Natural killer cell (primary cell): ENCODE measurements at regions of chr2 and their contacts with region 1.

Region 1: DNA sequence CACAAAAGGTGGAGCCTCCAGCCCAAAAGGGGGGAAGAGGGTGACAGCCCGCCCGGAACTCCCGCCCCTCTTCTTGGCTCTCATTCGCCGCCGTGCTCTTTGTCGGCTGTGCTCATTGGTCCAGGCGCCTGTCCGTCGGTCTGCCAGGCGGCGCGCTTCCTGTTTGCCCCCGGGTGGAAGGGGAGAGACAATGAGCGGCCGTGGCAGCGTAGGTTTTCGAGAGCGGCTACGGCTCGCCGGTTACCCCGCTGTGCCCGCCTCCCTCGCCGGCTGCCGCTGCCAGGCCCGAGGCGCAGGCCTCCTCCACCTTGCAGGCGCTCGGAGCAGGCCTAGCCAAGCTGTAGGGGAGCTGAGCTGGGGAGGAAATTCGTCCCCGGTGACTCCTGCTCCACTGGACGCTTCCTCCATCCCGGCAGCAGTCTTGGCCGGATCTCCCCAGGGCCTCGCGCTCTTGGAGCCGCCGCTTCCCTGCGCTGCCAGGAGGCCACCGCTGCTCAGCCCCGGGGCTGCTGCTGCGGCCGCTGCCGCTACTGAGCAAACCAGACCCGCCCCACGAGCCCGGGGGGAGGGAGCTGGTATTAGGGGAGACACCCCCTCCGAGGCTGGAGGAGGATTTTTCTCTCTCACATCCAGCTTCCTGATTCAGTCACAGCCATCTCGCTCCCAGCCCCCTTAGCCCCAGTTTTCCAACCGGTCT is at the start of gene SP3:
- DNase-seq: peak; percentile 94 to 98
- ATAC-seq: peak; percentile 58 to 80 (median 67)
- H3K4me3 ChIP-seq: peak within 1 kb of the TSS; percentile 80
- H3K4me3 Mint-ChIP-seq: peak within 1 kb of the TSS; percentile 98
- H3K27ac ChIP-seq: peak within 1 kb of the TSS; percentile 96
- H3K27ac Mint-ChIP-seq: peak within 1 kb of the TSS; percentile 97 to 98
- H3K4me1 ChIP-seq: peaks cover 8% of the 10 kb centered on the region
- H3K4me1 Mint-ChIP-seq: peaks cover 34 to 35% of the 10 kb centered on the region in 2 donors
- H3K27me3 ChIP-seq: no peaks in the 10 kb centered on the region
- H3K27me3 Mint-ChIP-seq: no peaks in the 10 kb centered on the region
- CTCF ChIP-seq: no peak
- total RNA-seq, gene SP3: 179 to 200 (median 188) TPM

Region 2: DNA sequence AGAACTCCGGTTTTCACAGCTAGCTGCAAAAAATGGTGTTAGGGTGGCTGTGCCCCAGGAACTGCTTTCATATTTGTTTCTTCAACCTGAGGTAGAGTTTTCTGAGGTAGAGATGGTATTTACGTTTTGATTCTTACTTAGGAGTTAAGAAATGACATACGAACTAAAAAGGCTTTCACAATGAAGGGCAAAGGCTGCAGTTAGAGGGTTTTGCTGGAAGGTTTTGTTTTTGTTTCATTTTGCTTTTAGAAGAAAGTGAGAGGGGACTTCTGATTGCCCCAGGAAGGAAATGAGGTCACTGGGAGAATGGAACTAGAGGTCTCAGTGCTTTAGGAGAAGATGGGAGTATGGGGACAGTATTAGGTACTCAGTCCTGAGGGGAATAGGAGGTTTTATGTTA is 595.3 kb before region 1 on chr2:
- intact Hi-C with region 1: no loop called
- DNase-seq: peak in 1 of 2 donors; percentile 29
- ATAC-seq: no peak
- H3K4me3 ChIP-seq: no peak overlapping the region
- H3K4me3 Mint-ChIP-seq: no peak overlapping the region
- H3K27ac ChIP-seq: no peak overlapping the region
- H3K27ac Mint-ChIP-seq: peak overlapping the region in 1 of 2 donors; percentile 8
- H3K4me1 ChIP-seq: no peaks in the 10 kb centered on the region
- H3K4me1 Mint-ChIP-seq: peaks cover 0 to 8% of the 10 kb centered on the region in 2 donors
- H3K27me3 ChIP-seq: no peaks in the 10 kb centered on the region
- H3K27me3 Mint-ChIP-seq: no peaks in the 10 kb centered on the region
- CTCF ChIP-seq: no peak

Region 3: GRCh38 chr2:173815772-173816171 is 149.7 kb before region 1 on chr2:
- intact Hi-C with region 1: no loop called
- DNase-seq: no peak
- ATAC-seq: no peak
- H3K4me3 ChIP-seq: no peak overlapping the region
- H3K4me3 Mint-ChIP-seq: no peak overlapping the region
- H3K27ac ChIP-seq: no peak overlapping the region
- H3K27ac Mint-ChIP-seq: no peak overlapping the region
- H3K4me1 ChIP-seq: no peaks in the 10 kb centered on the region
- H3K4me1 Mint-ChIP-seq: no peaks in the 10 kb centered on the region
- H3K27me3 ChIP-seq: no peaks in the 10 kb centered on the region
- H3K27me3 Mint-ChIP-seq: peaks cover 4 to 24% of the 10 kb centered on the region in 2 donors
- CTCF ChIP-seq: no peak

Region 4: GRCh38 chr2:173884025-173884802 is 81.3 kb before region 1 on chr2:
- intact Hi-C with region 1: loop called (anchors 2 kb)
- DNase-seq: peak in 1 of 2 donors; percentile 57
- ATAC-seq: peak; percentile 54 to 74 (median 68)
- H3K4me3 ChIP-seq: no peak overlapping the region
- H3K4me3 Mint-ChIP-seq: no peak overlapping the region
- H3K27ac ChIP-seq: no peak overlapping the region
- H3K27ac Mint-ChIP-seq: no peak overlapping the region
- H3K4me1 ChIP-seq: no peaks in the 10 kb centered on the region
- H3K4me1 Mint-ChIP-seq: peaks cover 10 to 11% of the 10 kb centered on the region in 2 donors
- H3K27me3 ChIP-seq: peaks cover 1% of the 10 kb centered on the region
- H3K27me3 Mint-ChIP-seq: peaks cover 8 to 46% of the 10 kb centered on the region in 2 donors
- CTCF ChIP-seq: peak; percentile 42

Region 5: GRCh38 chr2:173942861-173943538 is 22.5 kb before region 1 on chr2:
- intact Hi-C with region 1: loop called (anchors 2 kb)
- DNase-seq: no peak
- ATAC-seq: no peak
- H3K4me3 ChIP-seq: no peak overlapping the region
- H3K4me3 Mint-ChIP-seq: no peak overlapping the region
- H3K27ac ChIP-seq: no peak overlapping the region
- H3K27ac Mint-ChIP-seq: peak overlapping the region in 1 of 2 donors; percentile 78
- H3K4me1 ChIP-seq: peaks cover 28% of the 10 kb centered on the region
- H3K4me1 Mint-ChIP-seq: peaks cover 73 to 77% of the 10 kb centered on the region in 2 donors
- H3K27me3 ChIP-seq: no peaks in the 10 kb centered on the region
- H3K27me3 Mint-ChIP-seq: no peaks in the 10 kb centered on the region
- CTCF ChIP-seq: no peak

Region 6: DNA sequence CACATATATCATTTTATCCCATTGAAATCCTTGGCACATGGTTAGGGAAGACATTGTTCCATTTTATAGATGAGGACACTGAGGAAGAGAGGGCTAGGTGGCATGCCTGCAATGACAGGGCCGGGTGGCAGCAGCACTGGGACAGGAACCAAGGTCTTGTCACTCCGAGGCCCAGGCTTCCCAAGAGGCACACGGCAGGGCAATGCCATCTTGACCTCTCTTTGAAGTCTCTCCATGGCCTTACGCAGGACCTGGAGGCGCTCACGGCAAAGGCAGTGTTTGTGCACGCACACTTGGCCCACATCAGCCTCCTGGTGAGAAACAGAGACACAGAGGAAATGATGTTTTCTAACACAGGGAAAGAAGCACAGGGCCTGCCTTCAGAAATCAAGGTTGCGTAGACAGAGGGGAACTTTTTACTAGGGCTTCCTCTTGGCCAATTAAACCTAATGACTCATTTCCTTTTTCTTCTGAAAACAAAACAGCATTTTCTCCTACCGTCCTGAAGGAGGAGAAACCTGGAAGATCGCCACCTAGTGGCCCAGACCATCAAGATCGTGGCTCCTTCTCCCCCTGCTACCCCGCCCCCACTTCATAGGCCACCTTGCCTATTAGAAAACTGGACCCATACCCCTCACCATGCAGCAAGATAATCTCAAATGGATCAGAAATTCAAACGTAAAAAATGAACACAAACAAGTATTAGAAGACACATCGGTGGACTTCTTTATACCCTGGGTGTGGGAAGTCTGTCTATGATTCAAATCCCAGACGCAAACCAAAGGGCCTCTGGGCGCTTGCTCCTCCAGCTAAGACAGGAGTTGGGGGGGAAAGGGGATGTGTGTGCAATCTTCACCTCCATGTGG is 74.3 kb after region 1 on chr2:
- intact Hi-C with region 1: loop called (anchors 1 kb)
- DNase-seq: peak; percentile 75 to 94
- ATAC-seq: peak; percentile 90 to 95 (median 94)
- H3K4me3 ChIP-seq: no peak overlapping the region
- H3K4me3 Mint-ChIP-seq: peak overlapping the region; percentile 72
- H3K27ac ChIP-seq: peak overlapping the region; percentile 84
- H3K27ac Mint-ChIP-seq: peak overlapping the region; percentile 92 to 96
- H3K4me1 ChIP-seq: peaks cover 14% of the 10 kb centered on the region
- H3K4me1 Mint-ChIP-seq: peaks cover 9 to 10% of the 10 kb centered on the region in 2 donors
- H3K27me3 ChIP-seq: no peaks in the 10 kb centered on the region
- H3K27me3 Mint-ChIP-seq: peaks cover 8 to 12% of the 10 kb centered on the region in 2 donors
- CTCF ChIP-seq: peak; percentile 72

Region 7: DNA sequence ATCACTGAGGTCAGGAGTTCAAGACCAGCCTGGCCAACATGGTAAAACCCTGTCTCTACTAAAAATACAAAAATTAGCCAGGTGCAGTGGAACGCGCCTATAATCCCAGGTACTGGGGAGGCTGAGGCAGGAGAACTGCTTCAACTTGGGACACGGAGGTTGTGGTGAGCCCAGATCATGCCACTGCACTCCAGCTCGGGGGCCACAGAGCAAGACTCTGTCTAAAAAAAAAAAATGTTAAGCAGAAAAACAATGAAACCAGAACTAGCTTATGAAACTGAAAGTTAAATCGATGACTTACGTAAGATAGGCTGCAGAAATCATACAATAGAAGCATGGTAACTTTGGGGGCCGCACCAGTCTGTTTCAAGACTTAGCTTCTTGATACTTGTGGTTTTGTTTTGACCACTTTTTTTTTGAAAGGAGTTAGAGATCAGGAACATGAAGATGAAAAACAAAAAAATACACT is 527.5 kb after region 1 on chr2:
- intact Hi-C with region 1: loop called (anchors 5 kb)
- DNase-seq: peak; percentile 42 to 89
- ATAC-seq: peak; percentile 91 to 93 (median 92)
- H3K4me3 ChIP-seq: peak overlapping the region; percentile 24
- H3K4me3 Mint-ChIP-seq: peak overlapping the region; percentile 86
- H3K27ac ChIP-seq: peak overlapping the region; percentile 96
- H3K27ac Mint-ChIP-seq: peak overlapping the region; percentile 93 to 95
- H3K4me1 ChIP-seq: peaks cover 32% of the 10 kb centered on the region
- H3K4me1 Mint-ChIP-seq: peaks cover 47 to 54% of the 10 kb centered on the region in 2 donors
- H3K27me3 ChIP-seq: no peaks in the 10 kb centered on the region
- H3K27me3 Mint-ChIP-seq: no peaks in the 10 kb centered on the region
- CTCF ChIP-seq: no peak